AG04449 (cell line): ENCODE measurements at regions of chr6 and their contacts with region 1.

Region 1: DNA sequence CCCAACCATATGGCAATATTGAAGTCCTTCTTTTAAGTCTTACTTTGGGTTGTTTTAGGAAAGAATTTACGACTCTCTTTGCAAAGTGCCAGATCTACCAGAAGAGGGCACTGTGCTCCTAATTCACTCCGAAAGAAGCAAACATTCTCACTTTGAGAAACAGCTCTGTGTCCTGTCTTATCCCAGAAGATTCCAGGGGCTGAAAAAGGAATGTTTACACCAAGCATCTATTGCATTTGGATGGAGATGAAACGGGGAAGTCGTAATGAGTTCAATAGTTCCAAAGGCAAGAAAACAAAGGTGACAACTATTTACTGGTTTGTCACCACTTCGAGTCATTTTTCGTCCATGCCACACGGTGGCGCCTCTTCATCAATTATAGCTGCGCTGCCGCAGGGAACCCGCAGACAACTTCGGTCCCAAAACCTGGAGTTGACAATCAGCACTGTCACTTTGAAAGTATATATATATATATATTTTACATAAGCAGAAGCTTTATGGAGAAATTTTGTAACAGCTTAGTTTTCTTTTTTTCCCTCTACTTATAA is 121.6 kb downstream of the MOXD1 start:
- DNase-seq: no peak
- H3K4me3 ChIP-seq: peak overlapping the region; percentile 56
- CTCF ChIP-seq: peak; percentile 62

Region 2: GRCh38 chr6:131581523-131581922 is 698.1 kb before region 1 on chr6:
- CTCF ChIA-PET with region 1: no interaction called
- POLR2A ChIA-PET with region 1: no interaction called
- DNase-seq: no peak
- H3K4me3 ChIP-seq: no peak overlapping the region
- CTCF ChIP-seq: no peak

Region 3: DNA sequence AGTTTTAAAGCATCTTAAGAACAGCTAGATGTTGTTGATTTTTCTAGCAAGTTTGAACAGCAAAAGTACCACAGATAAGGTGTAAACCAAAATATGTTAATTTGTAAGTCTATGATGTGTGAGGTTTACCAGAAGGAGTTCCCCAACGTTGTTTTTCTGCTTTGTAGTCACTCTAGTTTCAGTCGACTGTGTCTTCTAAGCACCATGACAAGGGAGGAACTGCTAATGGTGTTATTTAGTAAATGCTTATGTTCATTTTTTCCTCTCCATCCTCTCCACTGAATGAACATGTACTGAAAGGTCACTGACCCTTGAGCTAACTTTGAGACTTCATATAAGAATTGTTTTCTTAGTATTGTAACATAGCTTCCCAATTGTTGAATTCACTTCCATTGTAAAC is 639.6 kb before region 1 on chr6:
- CTCF ChIA-PET with region 1: no interaction called
- POLR2A ChIA-PET with region 1: no interaction called
- DNase-seq: no peak
- H3K4me3 ChIP-seq: no peak overlapping the region
- CTCF ChIP-seq: no peak

Region 4: GRCh38 chr6:131914967-131915751 is 364.5 kb before region 1 on chr6:
- CTCF ChIA-PET with region 1: interaction called, 166 read pairs
- POLR2A ChIA-PET with region 1: no interaction called
- DNase-seq: no peak
- H3K4me3 ChIP-seq: no peak overlapping the region
- CTCF ChIP-seq: peak; percentile 72

Region 5: GRCh38 chr6:131995917-131996316 is 283.7 kb before region 1 on chr6:
- CTCF ChIA-PET with region 1: no interaction called
- POLR2A ChIA-PET with region 1: no interaction called
- DNase-seq: no peak
- H3K4me3 ChIP-seq: no peak overlapping the region
- CTCF ChIP-seq: no peak

Region 6: DNA sequence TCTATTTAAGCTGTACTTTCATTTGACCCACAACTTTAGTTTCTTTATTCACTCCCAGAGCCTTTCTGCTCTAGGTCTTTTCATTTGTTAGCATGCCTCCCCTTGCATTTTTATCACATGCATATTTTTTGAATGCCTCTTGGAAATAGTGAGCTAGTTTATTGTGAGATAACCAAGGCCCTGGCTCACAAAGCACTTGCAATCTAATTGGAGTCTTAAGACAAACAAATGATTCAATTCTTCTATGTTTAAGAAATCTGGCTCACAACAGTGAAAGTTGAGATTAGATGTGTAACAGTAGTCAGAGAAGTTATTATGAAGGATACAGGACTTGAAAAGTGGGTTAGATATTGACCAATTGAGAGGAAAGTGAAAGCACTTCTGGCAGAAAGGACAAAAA is 51.8 kb before region 1 on chr6:
- CTCF ChIA-PET with region 1: interaction called, 23 read pairs
- POLR2A ChIA-PET with region 1: no interaction called
- DNase-seq: peak; percentile 78
- H3K4me3 ChIP-seq: no peak overlapping the region
- CTCF ChIP-seq: no peak

Region 7: DNA sequence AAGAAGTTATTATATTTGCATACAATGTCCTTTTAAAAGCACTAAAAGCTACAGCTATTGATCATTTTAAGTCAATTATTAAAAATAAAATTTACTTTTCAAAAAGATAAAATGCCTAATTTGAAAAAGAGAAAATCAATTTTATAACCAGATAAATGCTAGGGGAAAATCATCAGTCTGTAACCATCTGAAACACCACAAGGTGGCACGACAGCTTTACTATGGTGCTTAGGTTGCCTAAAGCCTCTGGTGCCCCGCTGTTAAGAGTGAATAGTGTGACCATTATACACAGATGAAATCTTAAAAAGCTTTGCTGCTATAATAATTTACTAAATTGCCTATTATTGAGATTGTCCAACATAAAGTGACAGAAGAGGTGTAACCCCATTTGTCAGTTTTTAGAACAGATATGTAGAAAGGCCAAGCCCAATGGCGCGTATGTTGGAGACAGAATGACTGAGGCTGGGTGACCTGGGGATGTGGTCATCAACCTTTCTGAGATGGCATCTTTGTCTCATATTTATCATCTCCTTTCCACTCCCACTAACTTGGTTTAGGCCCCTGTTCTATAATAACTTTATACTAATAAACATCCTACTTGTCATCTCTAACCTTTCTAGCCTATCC is 20.8 kb after region 1 on chr6:
- CTCF ChIA-PET with region 1: interaction called, 626 read pairs
- POLR2A ChIA-PET with region 1: no interaction called
- DNase-seq: no peak
- H3K4me3 ChIP-seq: no peak overlapping the region
- CTCF ChIP-seq: peak; percentile 65

Region 8: DNA sequence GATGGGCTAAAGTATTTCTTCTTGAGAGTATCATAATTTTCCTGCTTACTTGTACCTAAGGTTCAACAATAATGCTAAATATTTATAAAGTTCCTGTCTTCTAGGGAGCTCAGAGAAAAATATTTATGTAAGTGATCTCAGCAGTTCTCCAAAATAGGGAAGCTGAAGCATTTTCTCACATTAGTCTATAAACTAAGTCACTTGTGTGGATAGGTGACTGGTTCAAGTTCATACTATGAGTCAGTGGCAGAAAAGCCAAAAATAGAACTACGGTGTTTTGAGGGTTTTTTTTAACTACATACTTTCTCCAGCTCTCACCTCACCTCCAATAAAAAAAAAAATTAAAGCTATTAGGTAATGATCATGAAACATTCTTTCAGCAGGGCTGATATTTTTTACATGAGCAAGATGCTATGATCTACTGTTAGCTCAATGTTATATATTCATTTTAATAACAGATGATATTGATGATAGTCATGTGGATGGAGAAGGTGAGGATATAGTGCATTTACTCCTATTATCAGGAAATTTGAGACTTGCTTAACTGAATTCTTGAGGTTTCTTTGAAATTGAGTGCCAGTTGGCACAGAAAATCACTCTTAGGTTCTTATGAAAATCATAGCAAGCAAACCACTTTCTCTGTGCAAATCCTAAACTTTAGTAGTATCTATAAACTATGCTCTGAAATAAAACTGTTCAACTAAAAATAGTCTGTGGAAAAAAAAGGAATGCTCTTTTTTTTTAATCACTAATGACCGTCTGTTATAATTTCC is 125.7 kb after region 1 on chr6:
- CTCF ChIA-PET with region 1: interaction called, 11 read pairs
- POLR2A ChIA-PET with region 1: no interaction called
- DNase-seq: no peak
- H3K4me3 ChIP-seq: no peak overlapping the region
- CTCF ChIP-seq: no peak

Region 9: DNA sequence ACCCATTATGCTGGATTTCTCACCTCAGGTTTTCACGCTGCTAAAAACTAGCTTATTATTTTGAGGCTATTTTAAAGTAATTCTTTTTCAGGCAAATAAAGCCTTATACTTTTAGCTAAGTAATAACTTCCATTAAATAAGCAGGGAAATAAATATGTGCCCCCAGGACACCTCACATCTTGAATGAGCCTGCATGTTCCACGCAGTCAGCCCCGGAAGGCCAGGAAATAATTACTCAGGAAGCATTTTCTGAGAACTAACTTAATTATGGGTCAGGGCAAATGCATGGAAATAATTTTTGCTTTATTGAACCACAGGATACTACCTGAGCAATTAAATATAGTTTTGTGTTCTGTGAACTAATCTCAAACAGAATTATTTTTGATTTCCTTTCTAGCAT is 192.1 kb after region 1 on chr6:
- CTCF ChIA-PET with region 1: interaction called, 13 read pairs
- POLR2A ChIA-PET with region 1: no interaction called
- DNase-seq: no peak
- H3K4me3 ChIP-seq: no peak overlapping the region
- CTCF ChIP-seq: no peak

Region 10: GRCh38 chr6:132715204-132715603 is 435.5 kb after region 1 on chr6:
- CTCF ChIA-PET with region 1: interaction called, 12 read pairs
- POLR2A ChIA-PET with region 1: no interaction called
- DNase-seq: no peak
- H3K4me3 ChIP-seq: no peak overlapping the region
- CTCF ChIP-seq: peak; percentile 22